ENCODE measurements at regions of chr6 and their contacts with region 1.

Region 1: DNA sequence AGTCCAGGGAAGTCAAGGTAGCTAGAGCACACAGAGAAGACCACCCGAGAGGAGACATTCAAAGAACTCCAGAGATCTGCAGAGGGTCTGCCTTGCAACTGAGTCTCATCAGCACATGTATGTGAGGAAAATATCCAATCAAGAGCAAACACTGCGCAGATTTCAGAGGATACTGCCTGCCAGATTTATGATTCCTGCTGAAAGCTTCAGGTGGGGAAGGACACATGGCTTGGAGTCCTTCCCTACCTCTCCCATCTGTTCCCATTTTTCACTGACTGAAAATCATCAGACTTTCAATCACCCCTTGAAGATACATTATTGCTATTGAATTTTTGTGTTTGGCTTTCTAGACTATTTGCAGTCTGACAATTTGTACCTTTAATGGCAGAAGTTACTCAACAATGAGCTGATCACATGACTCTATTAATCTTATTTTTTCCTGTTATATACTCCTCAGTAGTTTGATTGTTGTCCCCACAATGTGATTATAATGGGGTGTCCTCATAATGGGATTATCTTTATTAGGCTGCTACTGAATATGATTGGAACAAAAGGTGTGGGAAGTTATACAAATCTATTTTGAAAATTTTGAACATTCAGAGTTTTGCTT is 7.5 kb upstream of the KIAA1586 start:
- DNase-seq: no peak
- ATAC-seq: no peak
- H3K4me3 ChIP-seq: no peak overlapping the region
- H3K27ac ChIP-seq: no peak overlapping the region
- H3K4me1 ChIP-seq: no peaks in the 10 kb centered on the region
- H3K27me3 ChIP-seq: peaks cover 4% of the 10 kb centered on the region
- CTCF ChIP-seq: no peak
- POLR2A ChIP-seq: no peak
- RAD21 ChIP-seq: no peak

Region 2: DNA sequence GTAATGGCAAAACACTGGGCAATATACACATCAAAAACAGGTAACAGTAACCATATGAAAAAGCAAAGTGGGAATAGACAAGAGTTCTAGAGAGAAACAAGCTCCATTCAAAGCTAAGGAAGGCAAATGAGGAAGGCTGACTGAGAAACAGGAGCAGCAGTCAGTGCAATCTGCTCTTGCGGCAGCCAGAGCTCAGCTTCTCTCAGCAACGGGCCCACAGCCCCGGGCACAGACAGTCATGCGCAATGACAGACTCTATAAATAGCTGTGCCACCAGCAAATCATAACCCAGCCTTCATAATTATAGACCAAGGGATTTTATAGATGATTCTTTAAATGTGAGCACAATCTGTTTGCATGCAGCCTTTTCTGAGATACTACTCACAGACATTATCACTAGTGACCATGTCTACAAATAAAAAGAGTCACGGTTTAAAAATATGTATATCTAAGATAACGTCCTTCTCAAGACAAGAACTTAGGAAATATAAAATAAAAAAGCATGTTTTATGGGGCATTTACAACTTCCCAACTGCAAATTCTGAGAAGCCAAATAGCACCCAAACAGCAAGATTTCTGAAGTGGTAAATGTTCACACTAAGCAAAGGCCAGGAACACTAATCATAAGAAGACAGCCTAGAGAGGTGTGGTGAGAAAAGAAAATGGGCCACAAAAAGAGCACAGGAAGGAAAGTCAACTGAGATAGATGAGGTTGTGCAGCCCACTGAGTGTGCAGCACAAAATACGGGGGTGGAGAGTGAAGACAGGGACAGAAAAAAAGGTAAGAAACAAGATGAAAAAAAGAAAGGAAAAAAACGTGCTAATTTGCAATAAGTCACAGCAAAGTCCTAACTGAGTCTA is 124.0 kb before region 1 on chr6:
- CTCF ChIA-PET with region 1: no interaction called
- POLR2A ChIA-PET with region 1: no interaction called
- dilution Hi-C with region 1: no loop called
- in situ Hi-C with region 1: loop called (anchors 10 kb)
- intact Hi-C with region 1: no loop called
- DNase-seq: no peak
- ATAC-seq: no peak
- H3K4me3 ChIP-seq: no peak overlapping the region
- H3K27ac ChIP-seq: no peak overlapping the region
- H3K4me1 ChIP-seq: peaks cover 11% of the 10 kb centered on the region
- H3K27me3 ChIP-seq: no peaks in the 10 kb centered on the region
- CTCF ChIP-seq: no peak
- POLR2A ChIP-seq: no peak
- RAD21 ChIP-seq: no peak